Calu3 (cell line): ENCODE measurements at regions of chr9 and their contacts with region 1.

Region 1: DNA sequence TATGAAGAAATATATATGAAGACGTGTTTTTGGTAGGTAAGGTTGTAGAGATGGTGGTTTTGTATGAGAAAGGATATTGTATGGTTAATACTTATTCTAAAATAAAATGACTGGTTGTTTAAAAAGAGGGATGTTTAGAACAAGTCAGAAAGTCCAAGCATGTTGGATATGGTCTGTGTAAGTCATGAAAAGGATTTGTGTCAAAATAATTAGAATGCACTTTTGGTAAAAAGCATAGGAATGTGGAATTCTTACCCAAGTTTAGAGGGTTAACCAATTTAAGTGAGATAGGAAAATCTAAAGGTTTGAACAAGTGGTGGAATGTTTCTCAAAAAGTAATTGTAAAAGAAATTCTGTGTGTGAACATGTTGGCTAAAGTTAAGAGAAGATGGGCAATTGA is 1556.5 kb upstream of the C9orf72 start:
- DNase-seq: no peak
- H3K4me3 Mint-ChIP-seq: no peak overlapping the region
- H3K27ac Mint-ChIP-seq: no peak overlapping the region
- H3K4me1 Mint-ChIP-seq: no peaks in the 10 kb centered on the region
- H3K27me3 Mint-ChIP-seq: no peaks in the 10 kb centered on the region
- CTCF ChIP-seq: no peak

Region 2: DNA sequence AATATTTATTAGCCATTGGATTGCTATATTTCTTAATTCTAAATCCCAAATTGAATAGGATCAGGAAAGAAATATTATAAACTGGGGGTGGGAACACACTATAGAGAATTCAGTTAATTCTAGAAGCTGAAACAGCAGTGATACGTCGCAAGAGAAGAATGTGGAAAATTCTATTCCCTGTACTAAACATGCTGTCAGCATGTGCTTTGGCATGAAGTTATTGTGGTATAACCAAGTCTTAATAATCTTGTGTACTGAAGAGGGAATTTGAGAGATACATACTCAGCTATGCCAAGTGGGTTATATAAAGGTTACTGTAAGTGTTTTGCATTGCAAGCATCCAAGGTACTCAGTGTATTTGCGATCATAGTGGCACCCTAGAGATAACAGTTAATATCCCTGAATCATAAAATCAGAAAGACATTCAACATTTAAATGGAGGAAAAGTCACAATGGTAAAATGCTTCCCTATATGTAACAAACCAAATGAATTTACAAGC is 63.6 kb before region 1 on chr9:
- CTCF ChIA-PET with region 1: no interaction called
- intact Hi-C with region 1: no loop called
- DNase-seq: no peak
- H3K4me3 Mint-ChIP-seq: no peak overlapping the region
- H3K27ac Mint-ChIP-seq: no peak overlapping the region
- H3K4me1 Mint-ChIP-seq: no peaks in the 10 kb centered on the region
- H3K27me3 Mint-ChIP-seq: no peaks in the 10 kb centered on the region
- CTCF ChIP-seq: no peak

Region 3: GRCh38 chr9:29150606-29151005 is 20.8 kb after region 1 on chr9:
- CTCF ChIA-PET with region 1: no interaction called
- intact Hi-C with region 1: loop called (anchors 1 kb)
- DNase-seq: no peak
- H3K4me3 Mint-ChIP-seq: no peak overlapping the region
- H3K27ac Mint-ChIP-seq: no peak overlapping the region
- H3K4me1 Mint-ChIP-seq: no peaks in the 10 kb centered on the region
- H3K27me3 Mint-ChIP-seq: no peaks in the 10 kb centered on the region
- CTCF ChIP-seq: no peak